Heart left ventricle (tissue), 16 donors: ENCODE measurements at regions of chr3 and their contacts with region 1.

Region 1: GRCh38 chr3:42012935-42013690 is 51.2 kb upstream of the ULK4 start:
- DNase-seq: peak; percentile 79 to 91 (median 84)
- ATAC-seq: peak; percentile 50 to 88 (median 80)
- H3K4me3 ChIP-seq: peak overlapping the region; percentile 28 to 99 (median 93)
- H3K27ac ChIP-seq: peak overlapping the region; percentile 88 to 97 (median 94)
- H3K4me1 ChIP-seq: peaks cover 0 to 51% (median 35%) of the 10 kb centered on the region in 12 donors
- H3K27me3 ChIP-seq: no peaks in the 10 kb centered on the region
- CTCF ChIP-seq: no peak
- POLR2A ChIP-seq: no peak

Region 2: DNA sequence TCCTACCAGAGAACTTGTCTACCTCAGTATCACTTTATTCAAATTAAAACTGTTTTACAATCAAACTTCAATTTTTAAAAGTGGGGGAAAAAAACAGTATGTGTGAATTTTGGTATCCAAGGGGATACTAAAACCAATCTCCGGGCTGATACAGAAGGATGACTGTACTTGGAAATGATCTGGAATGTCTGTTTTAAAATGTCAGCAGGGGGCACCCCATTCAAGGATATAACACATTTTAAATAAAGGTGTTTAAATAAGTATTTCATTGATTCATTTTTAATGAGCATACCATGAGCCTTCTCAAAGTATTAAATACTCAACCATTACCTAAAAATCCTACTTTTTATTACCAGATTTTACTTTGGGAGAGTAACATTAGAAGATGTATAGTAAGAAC is 119.1 kb before region 1 on chr3:
- intact Hi-C with region 1: loop called in 2 of 10 experiments (anchors 5 to 10 kb)
- DNase-seq: peak in 1 of 5 donors; percentile 12
- ATAC-seq: no peak
- H3K4me3 ChIP-seq: no peak overlapping the region
- H3K27ac ChIP-seq: no peak overlapping the region
- H3K4me1 ChIP-seq: peaks cover 0 to 7% (median 0%) of the 10 kb centered on the region in 12 donors
- H3K27me3 ChIP-seq: no peaks in the 10 kb centered on the region
- CTCF ChIP-seq: peak; percentile 31 to 71 (median 63)
- POLR2A ChIP-seq: no peak

Region 3: DNA sequence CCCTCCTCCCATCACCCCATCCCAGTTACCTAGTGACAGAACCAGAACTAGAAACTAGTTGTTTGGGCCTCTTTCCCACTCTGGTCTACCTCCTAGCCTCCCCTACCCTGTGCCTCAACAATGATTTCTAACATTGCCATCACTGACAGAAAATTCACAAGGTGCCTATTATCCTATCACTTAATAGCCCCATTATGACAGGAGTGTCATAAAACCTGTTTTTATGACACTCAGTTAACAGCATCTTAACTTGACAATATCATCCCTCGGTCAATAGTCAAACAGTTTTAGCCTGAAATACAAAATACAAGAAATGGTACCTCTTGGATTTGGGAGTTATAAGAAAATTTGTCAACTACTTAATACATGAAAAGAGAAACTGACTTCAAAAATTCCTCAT is 97.8 kb before region 1 on chr3:
- intact Hi-C with region 1: loop called in 1 of 10 experiments (anchors 10 kb)
- DNase-seq: no peak
- ATAC-seq: no peak
- H3K4me3 ChIP-seq: no peak overlapping the region
- H3K27ac ChIP-seq: no peak overlapping the region
- H3K4me1 ChIP-seq: no peaks in the 10 kb centered on the region
- H3K27me3 ChIP-seq: no peaks in the 10 kb centered on the region
- CTCF ChIP-seq: no peak
- POLR2A ChIP-seq: no peak

Region 4: GRCh38 chr3:41975421-41976103 is 37.6 kb before region 1 on chr3:
- intact Hi-C with region 1: no loop called
- DNase-seq: no peak
- ATAC-seq: no peak
- H3K4me3 ChIP-seq: no peak overlapping the region
- H3K27ac ChIP-seq: no peak overlapping the region
- H3K4me1 ChIP-seq: peaks cover 0 to 6% (median 0%) of the 10 kb centered on the region in 12 donors
- H3K27me3 ChIP-seq: no peaks in the 10 kb centered on the region
- CTCF ChIP-seq: no peak
- POLR2A ChIP-seq: no peak

Region 5: DNA sequence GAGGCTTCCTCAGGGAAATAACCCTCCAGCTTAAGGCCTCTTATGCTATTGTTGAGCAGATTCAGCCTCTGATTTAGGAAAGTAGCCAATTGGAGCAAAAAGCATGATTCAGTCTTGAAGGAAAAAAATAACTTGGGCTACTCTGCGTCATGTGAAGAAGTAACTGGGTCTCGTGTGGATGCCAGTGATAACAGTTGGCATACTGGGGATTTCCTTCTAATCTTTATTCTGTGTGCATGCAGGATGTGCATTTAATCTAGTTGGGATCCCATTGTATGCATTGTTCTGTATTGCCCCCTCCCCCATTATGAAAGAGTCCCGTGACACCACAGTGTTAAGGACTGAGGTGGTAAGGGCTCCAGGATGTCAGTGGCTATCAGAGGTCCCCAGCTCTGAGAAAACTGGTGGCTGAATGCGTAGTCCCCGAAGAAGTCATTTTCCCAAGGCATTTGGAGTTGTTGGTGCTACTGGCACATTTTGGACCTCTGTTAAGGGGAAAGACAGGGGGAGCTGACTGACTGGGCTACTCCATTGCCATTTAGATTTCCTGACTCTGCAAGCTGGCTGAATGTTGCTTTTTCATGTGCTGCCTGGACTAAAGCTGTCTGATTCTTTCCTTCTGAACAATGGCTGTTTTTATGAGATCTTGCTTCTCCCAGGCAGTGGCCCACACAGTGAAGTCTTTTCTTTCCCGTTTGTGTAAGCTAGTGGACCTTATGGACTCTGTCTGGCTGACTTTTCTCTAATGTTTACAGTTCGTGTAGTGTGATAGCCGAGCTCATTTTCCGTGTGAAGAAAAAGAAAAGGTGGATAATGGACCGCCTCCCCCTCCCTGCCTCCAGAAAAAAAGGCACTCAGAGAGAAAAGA is 39.6 kb after region 1 on chr3:
- intact Hi-C with region 1: loop called in 3 of 10 experiments (anchors 5 kb)
- DNase-seq: no peak
- ATAC-seq: peak; percentile 26 to 56 (median 32)
- H3K4me3 ChIP-seq: peak overlapping the region in 2 of 12 donors; percentile 0 to 14
- H3K27ac ChIP-seq: peak overlapping the region; percentile 62 to 87 (median 78)
- H3K4me1 ChIP-seq: peaks cover 14 to 94% (median 67%) of the 10 kb centered on the region in 12 donors
- H3K27me3 ChIP-seq: no peaks in the 10 kb centered on the region
- CTCF ChIP-seq: peak in 4 of 12 donors; percentile 16 to 43 (median 35)
- POLR2A ChIP-seq: no peak

Region 6: DNA sequence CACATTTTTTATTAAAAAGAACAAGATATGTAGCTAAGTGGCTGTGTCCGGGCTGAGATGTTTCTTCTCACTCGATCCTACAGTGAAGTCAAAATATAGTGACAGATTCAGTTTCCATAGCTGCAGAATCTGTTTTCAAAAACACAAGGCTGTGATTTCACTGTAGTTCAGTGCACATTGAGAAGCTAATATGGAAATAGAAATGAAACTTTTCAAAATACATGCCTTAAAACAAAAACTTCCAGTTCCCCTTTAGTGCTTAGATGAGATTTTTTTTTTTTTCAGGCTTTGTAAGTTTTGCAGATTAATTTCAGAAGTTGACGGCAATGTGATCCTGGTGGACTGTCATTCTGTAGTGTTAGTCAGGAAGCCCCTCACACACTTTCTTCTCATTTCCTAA is 54.2 kb after region 1 on chr3:
- intact Hi-C with region 1: loop called in 4 of 10 experiments (anchors 2 to 5 kb)
- DNase-seq: no peak
- ATAC-seq: peak in 3 of 4 donors; percentile 56 to 66 (median 60)
- H3K4me3 ChIP-seq: peak overlapping the region in 7 of 12 donors; percentile 7 to 29 (median 10)
- H3K27ac ChIP-seq: peak overlapping the region; percentile 82 to 94 (median 89)
- H3K4me1 ChIP-seq: peaks cover 40 to 99% (median 96%) of the 10 kb centered on the region in 12 donors
- H3K27me3 ChIP-seq: no peaks in the 10 kb centered on the region
- CTCF ChIP-seq: no peak
- POLR2A ChIP-seq: no peak

Region 7: DNA sequence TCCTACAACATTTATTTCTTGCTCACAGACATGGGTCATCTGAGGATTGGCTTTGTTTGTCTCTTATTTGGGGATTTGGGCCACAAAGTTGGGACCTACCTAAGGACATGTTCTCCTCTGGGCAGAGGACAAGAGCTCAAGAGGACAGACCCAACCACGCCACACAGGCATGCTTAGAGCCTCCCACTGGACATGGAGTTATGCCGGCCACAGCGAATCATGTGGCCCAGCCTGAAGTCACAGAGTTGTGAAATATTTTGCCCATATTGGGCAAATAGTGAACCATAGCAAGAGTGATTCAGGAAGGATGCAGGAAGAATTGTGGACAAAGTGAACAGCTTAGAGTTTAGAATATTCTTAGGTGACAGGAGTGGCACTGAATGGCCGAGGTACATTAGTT is 87.9 kb after region 1 on chr3:
- intact Hi-C with region 1: loop called (anchors 1 to 5 kb)
- DNase-seq: peak; percentile 37 to 67 (median 56)
- ATAC-seq: peak; percentile 66 to 77 (median 70)
- H3K4me3 ChIP-seq: no peak overlapping the region
- H3K27ac ChIP-seq: peak overlapping the region; percentile 25 to 71 (median 64)
- H3K4me1 ChIP-seq: peaks cover 20 to 73% (median 66%) of the 10 kb centered on the region in 12 donors
- H3K27me3 ChIP-seq: no peaks in the 10 kb centered on the region
- CTCF ChIP-seq: no peak
- POLR2A ChIP-seq: no peak

Region 8: DNA sequence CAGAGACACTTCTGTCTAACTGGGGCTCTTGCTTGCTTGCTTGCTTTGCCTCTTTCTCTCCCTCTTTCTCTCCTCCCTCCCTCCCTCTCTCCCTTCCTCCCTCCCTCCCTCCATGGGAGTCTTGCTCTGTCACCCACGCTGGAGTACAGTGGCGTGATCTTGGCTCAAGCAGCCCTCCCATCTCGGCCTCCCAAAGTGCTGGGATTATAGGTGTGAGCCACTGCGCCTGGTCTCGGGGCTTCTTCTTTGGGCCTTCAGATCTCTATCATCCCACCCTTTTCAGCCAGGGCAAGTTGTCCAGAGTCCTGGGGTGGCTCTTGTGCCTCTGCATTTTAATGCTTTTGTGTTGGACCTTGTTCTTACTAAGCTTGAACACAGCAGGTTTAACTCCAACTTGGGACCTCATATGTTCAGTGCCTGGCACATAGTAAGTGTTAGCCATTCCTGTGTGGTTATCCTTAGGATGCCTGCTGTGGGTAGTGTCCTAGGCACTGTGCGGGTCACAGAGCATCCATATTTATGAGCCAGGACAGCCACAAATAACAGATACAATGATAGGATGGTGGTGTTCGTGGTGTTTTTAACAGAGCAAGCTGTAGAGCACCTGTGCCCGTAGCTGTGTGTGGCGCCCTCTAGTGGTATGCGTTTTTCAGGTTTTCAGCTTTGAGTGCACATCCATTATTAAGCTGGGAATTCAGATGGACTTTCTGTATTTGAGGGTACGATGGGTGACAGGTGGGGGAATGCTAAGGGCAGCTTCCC is 177.8 kb after region 1 on chr3:
- intact Hi-C with region 1: loop called in 7 of 10 experiments (anchors 5 to 10 kb)
- DNase-seq: peak in 3 of 5 donors; percentile 52 to 61 (median 52)
- ATAC-seq: peak in 3 of 4 donors; percentile 46 to 58 (median 57)
- H3K4me3 ChIP-seq: no peak overlapping the region
- H3K27ac ChIP-seq: no peak overlapping the region
- H3K4me1 ChIP-seq: peaks cover 0 to 57% (median 31%) of the 10 kb centered on the region in 12 donors
- H3K27me3 ChIP-seq: no peaks in the 10 kb centered on the region
- CTCF ChIP-seq: peak; percentile 74 to 90 (median 84)
- POLR2A ChIP-seq: no peak

Region 9: DNA sequence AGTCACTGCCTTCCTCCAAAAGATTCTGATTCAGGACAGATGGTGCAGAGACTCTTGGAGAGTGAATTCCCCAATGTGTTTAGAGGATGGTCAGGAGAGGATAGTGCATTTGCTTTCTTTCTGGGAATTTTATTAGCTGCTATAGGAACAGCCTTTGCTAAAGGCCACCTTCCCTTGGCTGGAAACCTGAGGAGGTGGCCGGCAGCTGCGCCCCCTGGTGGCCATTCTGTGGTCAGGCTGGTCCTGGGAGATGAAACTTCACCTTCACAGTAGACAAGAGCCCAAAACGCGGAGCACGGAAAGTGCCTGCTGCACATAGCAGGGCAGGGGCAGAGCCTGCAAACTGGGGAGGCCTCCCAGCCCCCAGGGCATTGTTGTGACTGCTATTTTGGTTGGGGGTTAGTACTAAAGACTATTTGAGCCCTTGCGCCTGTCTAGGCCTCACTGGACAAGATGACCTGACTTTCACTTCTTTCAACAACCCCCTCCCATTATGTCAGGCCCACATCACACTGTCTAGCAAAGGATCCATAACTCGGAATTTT is 534.4 kb after region 1 on chr3:
- intact Hi-C with region 1: no loop called
- DNase-seq: peak; percentile 65 to 82 (median 68)
- ATAC-seq: peak; percentile 40 to 64 (median 50)
- H3K4me3 ChIP-seq: no peak overlapping the region
- H3K27ac ChIP-seq: peak overlapping the region in 5 of 12 donors; percentile 2 to 54 (median 26)
- H3K4me1 ChIP-seq: peaks cover 0 to 28% (median 8%) of the 10 kb centered on the region in 12 donors
- H3K27me3 ChIP-seq: no peaks in the 10 kb centered on the region
- CTCF ChIP-seq: peak; percentile 85 to 99 (median 94)
- POLR2A ChIP-seq: no peak